Heart left ventricle (tissue), 16 donors: ENCODE measurements at regions of chr9 and their contacts with region 1.

Region 1: GRCh38 chr9:127734747-127735529 is at the start of gene TOR2A:
- DNase-seq: peak; percentile 98 to 99 (median 98)
- ATAC-seq: peak; percentile 91 to 96 (median 96)
- H3K4me3 ChIP-seq: peak within 1 kb of the TSS; percentile 40 to 85 (median 74)
- H3K27ac ChIP-seq: peak within 1 kb of the TSS; percentile 89 to 99 (median 94)
- H3K4me1 ChIP-seq: peaks cover 0 to 24% (median 13%) of the 10 kb centered on the region in 12 donors
- H3K27me3 ChIP-seq: no peaks in the 10 kb centered on the region
- CTCF ChIP-seq: peak; percentile 90 to 97 (median 92)
- POLR2A ChIP-seq: peak in 1 of 2 donors; percentile 94
- total RNA-seq, gene TOR2A: 1.7 to 9.2 (median 3.3) TPM

Region 2: DNA sequence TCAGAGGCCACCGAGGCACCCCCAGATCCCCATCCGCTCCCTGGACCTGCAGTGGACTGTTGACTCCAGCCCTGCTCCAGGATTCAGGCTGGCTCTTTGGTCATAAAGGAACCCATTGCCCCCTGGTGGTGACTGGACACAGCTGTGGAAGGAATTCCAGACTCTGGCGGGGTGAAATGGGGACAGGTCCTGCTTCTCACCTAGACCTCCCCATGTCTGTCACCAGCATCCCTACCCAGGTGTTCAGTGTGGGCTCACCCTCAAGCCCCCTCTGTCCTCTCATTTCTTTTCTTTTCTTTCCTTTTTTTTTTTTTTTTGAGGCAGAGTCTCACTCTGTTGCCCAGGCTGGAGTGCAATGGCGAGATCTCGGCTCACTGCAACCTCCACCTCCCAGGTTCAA is 148.4 kb before region 1 on chr9:
- intact Hi-C with region 1: loop called in 9 of 10 experiments (anchors 1 to 2 kb)
- DNase-seq: peak; percentile 81 to 90 (median 83)
- ATAC-seq: peak; percentile 82 to 94 (median 92)
- H3K4me3 ChIP-seq: no peak overlapping the region
- H3K27ac ChIP-seq: no peak overlapping the region
- H3K4me1 ChIP-seq: peaks cover 0 to 6% (median 0%) of the 10 kb centered on the region in 12 donors
- H3K27me3 ChIP-seq: no peaks in the 10 kb centered on the region
- CTCF ChIP-seq: peak; percentile 80 to 91 (median 86)
- POLR2A ChIP-seq: no peak

Region 3: GRCh38 chr9:127654619-127655018 is 80.3 kb before region 1 on chr9:
- intact Hi-C with region 1: no loop called
- DNase-seq: no peak
- ATAC-seq: no peak
- H3K4me3 ChIP-seq: no peak overlapping the region
- H3K27ac ChIP-seq: no peak overlapping the region
- H3K4me1 ChIP-seq: peaks cover 0 to 10% (median 0%) of the 10 kb centered on the region in 12 donors
- H3K27me3 ChIP-seq: no peaks in the 10 kb centered on the region
- CTCF ChIP-seq: no peak
- POLR2A ChIP-seq: no peak

Region 4: DNA sequence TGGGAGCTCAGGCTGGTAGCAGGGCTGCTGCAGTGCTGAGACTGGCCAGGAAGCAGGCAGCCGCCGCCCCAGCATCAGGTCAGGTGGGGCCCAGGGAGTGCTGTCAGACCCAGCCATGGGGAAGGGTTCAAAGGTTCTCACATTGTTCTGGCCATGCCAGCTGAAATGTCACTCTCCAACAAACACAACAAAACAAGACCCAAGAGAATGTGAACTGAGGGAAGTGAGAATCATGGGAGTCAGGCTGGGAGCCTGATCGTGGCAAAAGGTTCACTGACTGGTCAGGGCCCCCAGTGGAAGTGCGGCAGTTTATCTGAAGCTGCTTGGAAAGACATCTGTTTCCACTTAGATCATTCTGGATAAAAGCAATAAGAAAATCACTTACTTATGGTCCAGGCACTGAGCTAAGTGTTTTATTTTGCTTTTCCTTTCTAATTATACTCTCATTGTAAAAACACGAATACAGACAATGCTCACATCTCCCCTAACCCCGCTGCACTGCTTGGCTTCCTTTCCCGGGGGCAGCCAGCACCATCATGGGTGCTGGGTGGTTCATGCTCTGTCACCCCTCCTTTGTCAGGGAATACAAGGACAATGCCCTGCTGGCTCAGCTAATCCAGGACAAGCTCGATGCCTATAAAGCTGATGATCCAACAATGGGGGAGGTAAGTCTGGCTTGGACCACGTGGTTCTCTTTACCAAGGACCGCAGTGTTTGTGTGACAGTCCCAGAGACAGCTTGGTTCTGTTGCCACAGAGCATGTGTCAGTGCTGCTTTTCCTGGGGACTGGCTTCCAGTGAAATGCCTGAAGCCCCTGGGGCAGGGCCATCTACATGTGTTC is 70.1 kb before region 1 on chr9:
- intact Hi-C with region 1: loop called in 1 of 10 experiments (anchors 5 kb)
- DNase-seq: no peak
- ATAC-seq: peak in 2 of 4 donors; percentile 55 to 57
- H3K4me3 ChIP-seq: no peak overlapping the region
- H3K27ac ChIP-seq: peak overlapping the region in 3 of 12 donors; percentile 17 to 23 (median 21)
- H3K4me1 ChIP-seq: peaks cover 0 to 15% (median 0%) of the 10 kb centered on the region in 12 donors
- H3K27me3 ChIP-seq: no peaks in the 10 kb centered on the region
- CTCF ChIP-seq: no peak
- POLR2A ChIP-seq: no peak

Region 5: DNA sequence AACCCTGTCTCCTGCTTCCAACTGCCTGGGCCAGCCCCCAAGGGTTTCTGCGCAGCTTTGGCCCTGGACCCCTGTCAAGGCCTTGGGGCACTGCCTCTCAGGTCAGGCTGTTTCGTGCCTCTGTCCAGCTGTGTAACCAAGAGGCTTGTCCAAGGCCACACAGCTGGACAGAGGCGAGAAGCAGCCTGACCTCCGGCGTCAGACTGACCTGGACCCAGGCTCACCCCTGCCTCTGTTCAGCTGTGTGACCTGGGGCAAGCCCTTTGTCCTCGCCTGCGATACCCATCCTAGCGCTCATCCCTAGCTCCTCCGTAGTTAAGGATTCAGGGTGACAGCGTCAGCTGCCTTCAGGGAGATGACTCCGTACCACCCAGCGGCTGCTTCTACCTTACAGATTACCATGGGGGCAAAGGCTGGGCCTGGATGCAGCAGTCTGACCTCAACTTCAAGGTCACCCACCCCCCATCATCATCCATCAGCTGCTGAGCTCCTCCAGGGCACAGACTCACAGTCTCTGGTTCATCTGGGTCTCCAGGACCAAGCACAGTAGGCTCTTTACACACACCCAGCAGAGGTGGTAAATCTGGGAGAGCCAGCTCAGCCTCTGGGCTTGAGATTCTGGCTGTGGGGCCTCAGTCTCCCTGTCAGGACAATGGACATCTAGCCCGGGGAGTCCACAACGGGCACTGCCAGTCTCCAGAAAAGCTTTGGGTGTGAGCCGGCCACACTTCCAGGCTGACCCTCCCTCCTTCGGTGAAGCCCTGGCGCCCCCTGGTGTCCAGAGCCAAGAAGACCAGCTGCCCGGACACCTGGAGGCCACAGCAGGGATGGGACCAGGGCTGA is 134.6 kb after region 1 on chr9:
- intact Hi-C with region 1: loop called in 9 of 10 experiments (anchors 1 to 5 kb)
- DNase-seq: peak; percentile 90 to 96 (median 91)
- ATAC-seq: peak; percentile 64 to 80 (median 68)
- H3K4me3 ChIP-seq: no peak overlapping the region
- H3K27ac ChIP-seq: peak overlapping the region in 10 of 12 donors; percentile 27 to 88 (median 58)
- H3K4me1 ChIP-seq: peaks cover 0 to 55% (median 37%) of the 10 kb centered on the region in 12 donors
- H3K27me3 ChIP-seq: no peaks in the 10 kb centered on the region
- CTCF ChIP-seq: peak; percentile 85 to 94 (median 88)
- POLR2A ChIP-seq: no peak

Region 6: DNA sequence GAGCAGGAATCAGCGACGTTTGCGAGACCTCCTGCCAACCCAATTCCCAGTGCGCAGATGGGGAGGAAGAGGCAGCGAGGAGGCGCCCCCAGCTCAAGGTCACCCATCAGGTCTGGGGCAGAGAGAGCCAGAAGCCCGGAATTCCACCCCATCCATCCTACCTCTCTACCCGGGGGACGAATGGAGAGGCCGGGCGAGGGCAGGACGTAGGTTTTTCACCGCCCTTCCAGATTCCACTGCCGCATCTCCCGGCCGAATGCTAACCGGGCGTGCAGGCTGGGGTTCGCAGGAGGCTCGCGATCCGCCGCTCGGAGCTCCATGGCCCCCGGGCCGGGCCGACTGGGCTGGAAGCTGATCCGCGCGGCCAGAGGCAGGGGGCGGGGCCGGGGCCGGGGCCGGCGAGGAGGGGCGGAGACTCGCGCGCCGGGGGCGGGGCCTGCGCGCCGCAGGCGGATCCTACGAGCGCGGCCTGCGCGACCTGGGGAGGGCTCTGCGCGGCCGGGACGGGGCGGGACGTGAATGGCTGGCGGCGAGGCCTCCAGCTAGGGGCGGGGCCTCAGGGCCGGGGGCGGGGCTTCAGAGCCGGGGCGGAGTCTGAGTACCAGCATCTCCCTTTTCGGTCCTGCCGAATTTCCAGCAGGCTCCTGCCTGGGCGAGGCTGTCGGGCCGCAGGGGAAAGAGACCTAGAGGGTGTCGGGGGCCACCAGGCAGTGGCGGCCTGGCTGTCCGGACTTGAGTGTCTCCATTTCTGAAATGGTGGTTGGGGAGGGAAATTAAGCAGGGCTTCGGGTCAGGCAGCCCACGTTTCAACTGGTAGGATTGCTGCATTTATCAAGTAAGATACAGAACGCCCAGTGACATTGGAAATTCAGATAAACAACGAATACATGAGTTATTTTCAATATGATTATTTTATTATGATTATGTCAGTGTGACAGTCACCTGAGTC is 182.0 kb after region 1 on chr9 and contains the start of gene ST6GALNAC4:
- intact Hi-C with region 1: loop called in 9 of 10 experiments (anchors 1 to 5 kb)
- DNase-seq: peak; percentile 94 to 98 (median 95)
- ATAC-seq: peak; percentile 87 to 96 (median 92)
- H3K4me3 ChIP-seq: peak within 1 kb of the TSS; percentile 38 to 88 (median 76)
- H3K27ac ChIP-seq: peak within 1 kb of the TSS; percentile 5 to 81 (median 58)
- H3K4me1 ChIP-seq: peaks cover 7 to 60% (median 42%) of the 10 kb centered on the region in 12 donors
- H3K27me3 ChIP-seq: no peaks in the 10 kb centered on the region
- CTCF ChIP-seq: no peak
- POLR2A ChIP-seq: peak in 1 of 2 donors; percentile 45
- total RNA-seq, gene ST6GALNAC4: 28.3 to 66.1 (median 42.6) TPM